IMR-90 (cell line): ENCODE measurements at regions of chr7 and their contacts with region 1.

Region 1: DNA sequence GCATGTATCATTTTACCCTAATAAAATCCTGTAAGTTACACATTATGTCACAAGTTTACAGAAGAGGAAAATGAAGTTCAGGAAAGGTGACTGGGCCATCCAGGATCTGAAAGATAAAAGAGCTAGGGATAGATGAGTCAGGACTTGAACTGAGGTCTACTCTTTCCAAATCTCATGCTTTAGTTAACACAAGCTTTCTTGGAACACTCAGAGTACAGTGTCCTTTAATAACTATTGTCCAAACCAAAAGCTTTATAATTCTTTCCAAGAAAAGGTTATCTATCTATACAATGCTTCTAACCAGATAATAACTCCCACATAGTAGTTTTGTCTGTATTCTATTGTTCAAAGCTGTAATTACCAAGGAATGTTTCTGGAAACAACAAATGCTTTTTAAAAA is 164.6 kb downstream of the LRRN3 start:
- DNase-seq: no peak
- ATAC-seq: no peak
- H3K4me3 ChIP-seq: no peak overlapping the region
- H3K27ac ChIP-seq: no peak overlapping the region
- H3K4me1 ChIP-seq: no peaks in the 10 kb centered on the region
- H3K27me3 ChIP-seq: no peaks in the 10 kb centered on the region
- CTCF ChIP-seq: no peak
- POLR2A ChIP-seq: no peak
- RAD21 ChIP-seq: no peak

Region 2: GRCh38 chr7:111266613-111267012 is 11.0 kb after region 1 on chr7:
- CTCF ChIA-PET with region 1: no interaction called
- POLR2A ChIA-PET with region 1: interaction called, 15 read pairs
- dilution Hi-C with region 1: no loop called
- in situ Hi-C with region 1: no loop called
- intact Hi-C with region 1: no loop called
- DNase-seq: peak; percentile 67
- ATAC-seq: peak; percentile 80
- H3K4me3 ChIP-seq: no peak overlapping the region
- H3K27ac ChIP-seq: no peak overlapping the region
- H3K4me1 ChIP-seq: peaks cover 12% of the 10 kb centered on the region
- H3K27me3 ChIP-seq: no peaks in the 10 kb centered on the region
- CTCF ChIP-seq: no peak
- POLR2A ChIP-seq: no peak
- RAD21 ChIP-seq: no peak